Naive thymus-derived CD4-positive, alpha-beta T cell (primary cell): ENCODE measurements at regions of chr1 and their contacts with region 1.

Region 1: DNA sequence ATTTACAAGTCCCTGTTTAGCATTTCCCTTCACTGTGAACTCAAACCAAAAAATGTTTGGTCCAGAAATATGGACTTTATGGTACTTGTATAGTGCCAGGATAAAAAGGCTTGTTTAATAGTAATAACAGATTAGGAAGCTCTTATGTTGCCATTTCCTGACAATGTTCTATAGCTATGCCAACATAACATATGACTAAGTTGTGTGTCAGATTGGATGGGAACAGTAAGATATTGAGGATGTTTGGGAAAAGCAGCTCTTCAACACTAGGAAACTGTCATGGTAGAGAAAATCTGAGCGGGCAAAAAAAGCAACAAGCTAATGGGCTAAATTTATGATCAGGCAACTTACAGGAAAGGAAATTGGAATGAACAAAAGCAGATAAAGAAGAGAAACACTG is 287.1 kb upstream of the ADGRL4 start:
- DNase-seq: no peak
- ATAC-seq: no peak
- H3K4me3 ChIP-seq: no peak overlapping the region
- H3K4me3 Mint-ChIP-seq: no peak overlapping the region
- H3K27ac ChIP-seq: no peak overlapping the region
- H3K27ac Mint-ChIP-seq: no peak overlapping the region
- H3K4me1 ChIP-seq: no peaks in the 10 kb centered on the region
- H3K4me1 Mint-ChIP-seq: no peaks in the 10 kb centered on the region
- H3K27me3 ChIP-seq: no peaks in the 10 kb centered on the region
- H3K27me3 Mint-ChIP-seq: no peaks in the 10 kb centered on the region

Region 2: DNA sequence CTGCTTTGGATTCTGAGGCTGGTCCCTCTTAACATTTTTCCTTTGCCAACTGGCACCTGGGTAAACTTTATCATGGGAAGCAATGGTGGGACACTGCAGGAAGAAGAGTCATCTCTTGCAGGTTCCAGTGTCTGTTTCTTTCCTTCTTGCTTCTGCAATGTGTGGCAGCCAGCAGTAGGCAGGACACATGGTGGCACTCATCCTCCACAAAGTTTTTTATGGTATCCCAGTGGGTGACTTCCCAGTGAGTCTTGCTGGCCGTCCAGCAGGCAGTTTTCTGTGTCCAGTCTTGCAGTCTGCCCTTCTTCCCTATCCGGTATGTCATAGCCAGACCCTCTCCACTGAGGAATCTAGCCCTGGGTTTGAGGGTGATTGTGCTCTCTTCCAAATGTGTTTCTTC is 38.1 kb after region 1 on chr1:
- CTCF ChIA-PET with region 1: no interaction called
- POLR2A ChIA-PET with region 1: no interaction called
- intact Hi-C with region 1: loop called in 1 of 2 experiments (anchors 2 kb)
- DNase-seq: no peak
- ATAC-seq: no peak
- H3K4me3 ChIP-seq: no peak overlapping the region
- H3K4me3 Mint-ChIP-seq: no peak overlapping the region
- H3K27ac ChIP-seq: no peak overlapping the region
- H3K27ac Mint-ChIP-seq: no peak overlapping the region
- H3K4me1 ChIP-seq: no peaks in the 10 kb centered on the region
- H3K4me1 Mint-ChIP-seq: no peaks in the 10 kb centered on the region
- H3K27me3 ChIP-seq: no peaks in the 10 kb centered on the region
- H3K27me3 Mint-ChIP-seq: no peaks in the 10 kb centered on the region

Region 3: DNA sequence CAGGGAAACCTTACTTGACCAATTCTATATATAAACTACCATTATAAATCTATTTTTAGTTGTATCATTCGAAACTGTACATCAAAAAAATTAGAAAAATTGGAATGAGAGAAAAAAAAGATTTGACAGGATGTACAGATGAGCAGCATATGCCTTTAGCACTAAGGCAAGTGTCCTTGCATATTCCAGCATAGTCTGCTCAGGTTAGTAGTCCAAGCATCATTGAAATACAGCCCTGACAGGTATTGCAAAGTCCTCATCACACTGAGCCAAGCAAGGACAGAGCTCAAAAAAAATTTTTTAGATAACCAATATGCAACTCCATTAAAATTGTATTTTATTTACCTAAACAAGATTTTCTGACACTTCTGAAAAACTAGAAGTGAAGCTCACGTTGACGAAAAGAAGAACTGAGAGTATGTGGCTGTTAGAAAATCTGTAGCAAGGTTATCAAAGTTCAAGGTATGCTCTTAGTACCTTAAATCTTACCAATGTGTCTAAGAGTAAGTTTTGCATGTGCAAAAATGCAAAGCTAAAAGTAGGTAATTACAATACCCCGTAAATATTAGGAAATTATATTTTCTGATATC is 178.6 kb after region 1 on chr1:
- CTCF ChIA-PET with region 1: no interaction called
- POLR2A ChIA-PET with region 1: no interaction called
- intact Hi-C with region 1: no loop called
- DNase-seq: no peak
- ATAC-seq: no peak
- H3K4me3 ChIP-seq: no peak overlapping the region
- H3K4me3 Mint-ChIP-seq: no peak overlapping the region
- H3K27ac ChIP-seq: no peak overlapping the region
- H3K27ac Mint-ChIP-seq: no peak overlapping the region
- H3K4me1 ChIP-seq: no peaks in the 10 kb centered on the region
- H3K4me1 Mint-ChIP-seq: no peaks in the 10 kb centered on the region
- H3K27me3 ChIP-seq: no peaks in the 10 kb centered on the region
- H3K27me3 Mint-ChIP-seq: no peaks in the 10 kb centered on the region